Heart left ventricle (tissue), 16 donors: ENCODE measurements at regions of chr9 and their contacts with region 1.

Region 1: DNA sequence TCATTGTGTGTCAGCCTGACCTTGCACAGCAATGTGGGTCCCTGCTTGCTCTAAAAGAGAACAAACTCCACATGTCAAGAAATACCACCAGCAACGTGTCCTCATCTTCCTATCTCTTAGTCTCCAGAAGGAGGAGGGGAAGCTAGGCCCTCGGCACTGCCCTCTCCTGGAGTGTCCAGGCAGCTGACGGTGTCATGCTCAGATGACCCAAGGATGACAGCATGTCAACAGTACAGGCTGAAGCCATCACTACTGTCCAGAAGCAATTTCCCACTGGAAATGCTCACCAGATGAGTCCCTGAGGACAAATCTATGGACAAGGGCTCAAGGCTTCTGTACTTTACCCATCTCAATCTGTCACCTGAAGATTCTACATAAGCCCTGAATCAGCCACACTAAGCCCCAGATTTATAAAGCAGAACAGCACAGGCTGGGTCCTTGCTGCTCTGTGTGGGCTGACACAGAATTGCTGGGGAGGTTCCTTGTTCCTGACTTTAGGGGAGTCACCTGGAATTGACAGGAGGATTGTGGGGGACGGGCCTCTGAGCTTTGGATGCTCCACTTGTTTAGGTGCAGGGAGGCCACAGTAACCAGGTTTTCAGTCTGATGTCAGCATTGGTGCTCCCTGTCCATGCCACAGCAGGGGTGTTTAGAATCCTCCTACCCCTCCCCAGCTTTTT is 210.2 kb downstream of the DAB2IP start:
- DNase-seq: peak; percentile 38 to 71 (median 61)
- ATAC-seq: peak; percentile 68 to 87 (median 82)
- H3K4me3 ChIP-seq: no peak overlapping the region
- H3K27ac ChIP-seq: no peak overlapping the region
- H3K4me1 ChIP-seq: peaks cover 0 to 19% (median 11%) of the 10 kb centered on the region in 12 donors
- H3K27me3 ChIP-seq: no peaks in the 10 kb centered on the region
- CTCF ChIP-seq: peak; percentile 32 to 74 (median 62)
- POLR2A ChIP-seq: no peak

Region 2: DNA sequence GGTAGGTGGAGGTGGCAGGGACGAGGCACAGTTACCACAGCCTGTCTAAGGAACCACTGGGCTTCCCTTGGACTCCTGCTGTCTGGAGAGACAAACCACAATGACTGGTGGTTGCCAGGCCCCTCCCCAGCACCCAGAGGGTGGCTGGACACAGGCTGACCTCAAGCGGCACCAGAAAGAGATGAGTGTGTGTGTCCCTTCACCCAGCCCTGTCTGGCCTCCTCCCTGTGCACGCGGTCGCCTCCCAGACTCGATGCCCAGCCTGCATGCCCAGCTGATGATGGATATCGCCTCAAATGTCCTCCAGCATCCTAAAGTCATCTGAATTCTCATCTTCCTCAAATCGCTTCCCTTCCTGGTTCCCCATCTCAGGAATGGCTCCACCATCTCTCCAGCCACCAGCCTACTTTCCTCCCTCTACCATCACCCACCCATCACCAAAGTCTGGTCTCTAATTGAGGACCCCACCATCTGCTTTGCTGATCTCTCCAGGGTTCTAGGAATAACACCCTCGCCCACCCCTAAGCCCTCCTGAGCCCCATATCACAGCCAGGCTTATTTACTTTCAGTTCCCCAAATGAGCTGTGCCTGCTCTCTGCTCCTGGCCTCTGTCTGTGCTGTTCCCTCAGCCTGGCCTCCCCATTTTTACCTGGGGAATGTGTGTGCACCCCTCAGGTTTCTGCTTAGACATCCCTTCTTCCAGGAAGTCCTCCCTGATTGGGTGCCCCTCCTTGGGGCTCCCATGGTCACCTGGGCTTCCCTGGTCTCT is 309.5 kb before region 1 on chr9:
- intact Hi-C with region 1: loop called in 7 of 10 experiments (anchors 2 to 10 kb)
- DNase-seq: no peak
- ATAC-seq: no peak
- H3K4me3 ChIP-seq: no peak overlapping the region
- H3K27ac ChIP-seq: no peak overlapping the region
- H3K4me1 ChIP-seq: peaks cover 3 to 24% (median 20%) of the 10 kb centered on the region in 12 donors
- H3K27me3 ChIP-seq: no peaks in the 10 kb centered on the region
- CTCF ChIP-seq: no peak
- POLR2A ChIP-seq: no peak

Region 3: DNA sequence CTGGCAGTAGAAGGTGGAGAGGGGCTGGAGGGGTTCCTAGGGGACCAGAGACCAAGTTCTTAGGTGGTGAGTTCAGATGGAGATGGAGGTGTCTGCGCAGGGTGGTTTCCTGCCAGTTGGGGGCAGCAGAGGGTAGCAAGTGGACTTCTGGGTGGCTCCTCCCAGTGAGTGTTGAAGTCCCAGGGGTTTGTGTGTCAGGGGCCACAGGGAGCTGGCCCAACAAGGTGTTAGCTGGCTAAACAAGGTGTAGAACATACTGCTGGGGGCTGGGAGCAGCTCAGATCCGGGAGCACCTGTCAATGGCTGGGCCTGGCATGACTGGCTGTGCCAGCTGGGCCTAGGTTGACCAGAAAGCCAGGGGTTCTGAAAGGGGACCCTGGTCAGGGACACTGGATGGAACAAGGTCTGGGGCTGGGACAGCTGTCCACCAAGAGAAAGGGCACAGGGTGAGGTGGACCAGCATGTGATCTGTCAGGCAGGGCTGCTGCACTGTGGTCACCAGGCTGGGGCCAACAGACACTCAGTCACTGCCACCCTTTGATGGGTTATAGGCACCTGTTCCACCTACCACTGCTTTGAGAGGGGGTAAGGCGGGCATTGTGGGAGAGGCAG is 174.6 kb before region 1 on chr9:
- intact Hi-C with region 1: loop called in 5 of 10 experiments (anchors 5 to 10 kb)
- DNase-seq: peak in 4 of 5 donors; percentile 71 to 84 (median 76)
- ATAC-seq: peak; percentile 56 to 72 (median 62)
- H3K4me3 ChIP-seq: no peak overlapping the region
- H3K27ac ChIP-seq: peak overlapping the region in 4 of 12 donors; percentile 14 to 42 (median 36)
- H3K4me1 ChIP-seq: peaks cover 3 to 68% (median 28%) of the 10 kb centered on the region in 12 donors
- H3K27me3 ChIP-seq: no peaks in the 10 kb centered on the region
- CTCF ChIP-seq: peak; percentile 70 to 91 (median 82)
- POLR2A ChIP-seq: no peak

Region 4: GRCh38 chr9:121718082-121718856 is 143.4 kb before region 1 on chr9:
- intact Hi-C with region 1: loop called in 1 of 10 experiments (anchors 10 kb)
- DNase-seq: peak in 3 of 5 donors; percentile 57 to 77 (median 68)
- ATAC-seq: peak; percentile 76 to 81 (median 80)
- H3K4me3 ChIP-seq: no peak overlapping the region
- H3K27ac ChIP-seq: peak overlapping the region in 4 of 12 donors; percentile 30 to 47 (median 38)
- H3K4me1 ChIP-seq: peaks cover 15 to 98% (median 79%) of the 10 kb centered on the region in 12 donors
- H3K27me3 ChIP-seq: no peaks in the 10 kb centered on the region
- CTCF ChIP-seq: no peak
- POLR2A ChIP-seq: no peak

Region 5: GRCh38 chr9:121750715-121751623 is 110.7 kb before region 1 on chr9:
- intact Hi-C with region 1: loop called in 2 of 10 experiments (anchors 5 kb)
- DNase-seq: no peak
- ATAC-seq: no peak
- H3K4me3 ChIP-seq: no peak overlapping the region
- H3K27ac ChIP-seq: peak overlapping the region in 11 of 12 donors; percentile 13 to 94 (median 68)
- H3K4me1 ChIP-seq: peaks cover 47 to 100% (median 95%) of the 10 kb centered on the region in 12 donors
- H3K27me3 ChIP-seq: no peaks in the 10 kb centered on the region
- CTCF ChIP-seq: no peak
- POLR2A ChIP-seq: no peak

Region 6: DNA sequence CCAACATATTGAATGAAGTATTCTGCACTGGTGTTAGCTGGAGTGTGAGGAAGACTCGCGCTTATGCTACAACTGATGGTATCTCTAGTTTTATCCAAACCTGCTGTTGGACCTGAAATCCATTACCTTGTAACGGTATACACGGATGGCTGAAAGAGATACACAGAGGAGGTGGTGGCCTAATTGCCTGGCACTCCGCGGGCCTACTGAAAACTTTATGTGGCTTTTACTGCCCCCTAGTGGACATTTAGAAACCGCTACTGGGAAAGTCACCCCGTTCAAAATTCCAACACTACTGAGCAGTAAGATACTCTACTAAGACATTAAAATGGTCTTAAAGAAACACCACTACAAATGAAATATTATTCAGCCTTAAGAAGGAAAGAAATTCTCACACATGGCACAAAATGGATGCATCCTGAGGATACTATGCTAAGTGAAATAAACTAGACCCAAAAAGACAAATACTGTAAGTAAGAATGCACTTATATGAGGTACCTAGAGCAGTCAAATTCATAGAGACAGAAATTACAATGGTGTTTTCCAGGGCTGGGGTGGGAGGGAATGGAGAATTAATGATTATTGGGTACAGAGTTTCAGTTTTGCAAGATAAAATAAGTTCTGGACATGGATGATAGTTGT is 131.1 kb after region 1 on chr9:
- intact Hi-C with region 1: loop called in 1 of 10 experiments (anchors 5 kb)
- DNase-seq: peak in 4 of 5 donors; percentile 58 to 71 (median 64)
- ATAC-seq: peak; percentile 61 to 78 (median 69)
- H3K4me3 ChIP-seq: no peak overlapping the region
- H3K27ac ChIP-seq: no peak overlapping the region
- H3K4me1 ChIP-seq: peaks cover 0 to 25% (median 4%) of the 10 kb centered on the region in 12 donors
- H3K27me3 ChIP-seq: no peaks in the 10 kb centered on the region
- CTCF ChIP-seq: peak; percentile 77 to 95 (median 86)
- POLR2A ChIP-seq: no peak